ENCODE measurements at regions of chrX and their contacts with region 1.

Region 1: DNA sequence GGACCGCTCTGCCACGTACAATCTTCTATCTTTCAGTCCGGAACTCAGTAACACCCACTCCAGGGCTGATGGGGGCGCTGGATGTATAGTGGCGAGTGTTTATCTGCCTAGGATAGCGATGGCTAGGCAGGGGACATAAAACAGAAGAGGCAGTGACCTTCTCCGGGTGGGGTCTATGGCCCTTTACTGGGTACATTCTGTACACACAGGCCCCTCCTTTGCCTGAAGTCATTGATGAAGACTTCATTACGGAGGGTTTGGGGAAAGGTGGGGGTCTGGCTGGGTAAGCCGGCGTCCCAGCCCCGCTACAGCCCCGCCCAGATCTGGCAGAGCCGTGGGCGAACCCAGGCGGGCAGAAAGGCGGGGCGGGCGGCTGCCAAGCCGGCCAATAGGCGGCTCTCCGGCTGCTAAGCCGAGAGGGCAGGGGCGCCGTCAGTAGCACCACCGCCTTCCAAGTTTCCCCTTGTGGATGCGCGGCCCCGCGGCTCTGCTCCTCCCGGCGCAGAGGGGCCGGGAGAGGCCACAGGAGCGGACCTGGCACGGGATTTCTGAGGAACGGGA is at the start of gene CHST7:
- DNase-seq: peak; percentile 18 to 81 (median 46)
- ATAC-seq: peak; percentile 54
- H3K4me3 ChIP-seq: peak within 1 kb of the TSS; percentile 71
- H3K4me3 Mint-ChIP-seq: peak within 1 kb of the TSS; percentile 74
- H3K27ac ChIP-seq: peak within 1 kb of the TSS; percentile 52 to 64
- H3K27ac Mint-ChIP-seq: peak within 1 kb of the TSS; percentile 78
- H3K4me1 ChIP-seq: peaks cover 50% of the 10 kb centered on the region
- H3K4me1 Mint-ChIP-seq: peaks cover 39% of the 10 kb centered on the region
- H3K27me3 ChIP-seq: no peaks in the 10 kb centered on the region
- H3K27me3 Mint-ChIP-seq: no peaks in the 10 kb centered on the region
- CTCF ChIP-seq: no peak
- total RNA-seq, gene CHST7: 4.0 to 4.6 TPM

Region 2: GRCh38 chrX:45801554-45801953 is 771.9 kb before region 1 on chrX:
- CTCF ChIA-PET with region 1: no interaction called
- POLR2A ChIA-PET with region 1: no interaction called
- intact Hi-C with region 1: loop called in 1 of 2 experiments (anchors 10 kb)
- DNase-seq: peak in 3 of 14 experiments; percentile 59 to 66 (median 64)
- ATAC-seq: peak; percentile 50
- H3K4me3 ChIP-seq: peak overlapping the region; percentile 38
- H3K4me3 Mint-ChIP-seq: peak overlapping the region; percentile 72
- H3K27ac ChIP-seq: no peak overlapping the region
- H3K27ac Mint-ChIP-seq: peak overlapping the region; percentile 83
- H3K4me1 ChIP-seq: peaks cover 28% of the 10 kb centered on the region
- H3K4me1 Mint-ChIP-seq: peaks cover 57% of the 10 kb centered on the region
- H3K27me3 ChIP-seq: no peaks in the 10 kb centered on the region
- H3K27me3 Mint-ChIP-seq: no peaks in the 10 kb centered on the region
- CTCF ChIP-seq: peak; percentile 44

Region 3: DNA sequence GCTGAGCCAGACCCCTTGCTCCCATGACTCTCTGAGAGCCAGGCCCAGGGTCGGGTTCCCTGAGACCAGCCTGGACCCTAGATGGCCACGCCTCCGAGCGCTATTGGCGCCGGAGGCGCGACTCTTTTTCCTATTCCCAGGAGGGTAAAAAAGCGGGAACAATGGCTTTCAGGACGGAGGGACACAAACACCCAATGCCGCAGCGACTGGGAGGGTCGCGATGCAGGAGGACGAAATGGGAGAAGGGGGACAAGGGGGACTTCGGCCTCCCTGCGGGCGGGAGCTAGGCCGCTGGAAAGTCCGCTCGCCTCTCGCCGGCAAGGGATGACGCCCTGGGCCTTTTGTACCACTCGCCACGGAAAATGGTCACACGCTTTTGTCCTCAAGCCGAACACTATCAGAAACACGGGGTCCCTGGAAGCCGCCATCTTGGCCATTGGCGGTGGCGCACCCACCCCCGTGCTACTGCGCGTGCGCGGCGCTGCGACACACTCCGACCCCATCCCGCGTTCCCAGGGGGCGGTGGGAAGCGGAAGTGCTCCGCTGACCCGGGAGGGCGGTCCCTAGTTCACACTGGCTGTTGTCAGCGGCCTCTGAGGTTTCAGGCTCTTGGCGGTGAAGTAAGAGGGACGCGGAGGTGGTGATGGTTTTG is 126.6 kb before region 1 on chrX:
- CTCF ChIA-PET with region 1: interaction called, 3 read pairs
- POLR2A ChIA-PET with region 1: no interaction called
- intact Hi-C with region 1: loop called in 1 of 2 experiments (anchors 5 kb)
- DNase-seq: peak; percentile 66 to 93 (median 79)
- ATAC-seq: peak; percentile 88
- H3K4me3 ChIP-seq: peak overlapping the region; percentile 87
- H3K4me3 Mint-ChIP-seq: peak overlapping the region; percentile 91
- H3K27ac ChIP-seq: peak overlapping the region; percentile 50 to 83
- H3K27ac Mint-ChIP-seq: peak overlapping the region; percentile 92
- H3K4me1 ChIP-seq: peaks cover 18% of the 10 kb centered on the region
- H3K4me1 Mint-ChIP-seq: peaks cover 10% of the 10 kb centered on the region
- H3K27me3 ChIP-seq: no peaks in the 10 kb centered on the region
- H3K27me3 Mint-ChIP-seq: no peaks in the 10 kb centered on the region
- CTCF ChIP-seq: no peak

Region 4: DNA sequence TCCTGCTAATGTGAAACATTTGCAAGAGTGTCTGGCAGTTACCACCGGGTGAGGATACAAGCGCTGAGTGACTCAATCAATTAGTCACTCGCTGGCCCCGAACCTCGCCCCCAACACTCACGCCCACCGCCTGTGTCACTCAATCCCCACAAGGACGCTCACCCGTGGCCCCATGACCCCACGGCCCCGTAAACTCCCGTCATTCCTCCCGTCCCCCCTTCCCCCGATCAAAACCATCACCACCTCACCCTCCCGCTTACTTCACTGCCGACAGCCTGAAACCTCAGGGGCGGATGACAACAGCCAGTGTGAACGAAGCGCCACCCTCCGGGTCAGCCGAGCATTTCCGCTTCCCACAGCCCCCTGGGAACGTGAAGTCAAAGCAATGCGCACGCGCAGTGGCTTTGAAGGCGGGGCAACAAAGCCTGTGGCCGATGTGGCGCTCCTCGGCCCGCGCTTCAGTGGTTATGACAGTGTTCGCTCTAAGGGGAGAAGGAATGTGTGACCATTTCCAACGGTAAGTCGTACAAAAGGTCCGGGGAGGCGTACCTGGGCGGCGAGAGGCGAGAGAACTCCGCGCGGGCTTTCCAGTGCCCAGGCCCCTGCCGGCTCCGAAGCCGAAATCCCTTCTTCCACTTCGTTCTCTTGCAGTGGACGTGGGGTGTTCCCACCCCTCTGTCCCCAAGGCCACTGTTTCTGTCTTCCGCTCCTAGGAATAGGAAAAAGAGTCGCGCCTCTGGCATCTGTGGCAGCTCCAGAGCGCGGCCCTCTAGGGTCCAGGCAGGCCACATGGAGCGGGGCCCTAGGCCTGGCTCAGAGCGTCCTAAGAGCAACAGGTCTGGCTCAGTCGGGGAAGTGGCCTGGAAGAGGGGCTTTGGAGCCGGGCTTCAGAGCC is 28.1 kb before region 1 on chrX and contains the start of gene ZNF674:
- CTCF ChIA-PET with region 1: no interaction called
- POLR2A ChIA-PET with region 1: no interaction called
- intact Hi-C with region 1: loop called in 1 of 2 experiments (anchors 1 kb)
- DNase-seq: peak; percentile 85 to 96 (median 90)
- ATAC-seq: peak; percentile 92
- H3K4me3 ChIP-seq: peak within 1 kb of the TSS; percentile 96
- H3K4me3 Mint-ChIP-seq: peak within 1 kb of the TSS; percentile 93
- H3K27ac ChIP-seq: peak within 1 kb of the TSS; percentile 72 to 78
- H3K27ac Mint-ChIP-seq: peak within 1 kb of the TSS; percentile 93
- H3K4me1 ChIP-seq: peaks cover 32% of the 10 kb centered on the region
- H3K4me1 Mint-ChIP-seq: peaks cover 28% of the 10 kb centered on the region
- H3K27me3 ChIP-seq: no peaks in the 10 kb centered on the region
- H3K27me3 Mint-ChIP-seq: no peaks in the 10 kb centered on the region
- CTCF ChIP-seq: peak; percentile 22
- total RNA-seq, gene ZNF674: 1.2 to 1.9 TPM

Region 5: DNA sequence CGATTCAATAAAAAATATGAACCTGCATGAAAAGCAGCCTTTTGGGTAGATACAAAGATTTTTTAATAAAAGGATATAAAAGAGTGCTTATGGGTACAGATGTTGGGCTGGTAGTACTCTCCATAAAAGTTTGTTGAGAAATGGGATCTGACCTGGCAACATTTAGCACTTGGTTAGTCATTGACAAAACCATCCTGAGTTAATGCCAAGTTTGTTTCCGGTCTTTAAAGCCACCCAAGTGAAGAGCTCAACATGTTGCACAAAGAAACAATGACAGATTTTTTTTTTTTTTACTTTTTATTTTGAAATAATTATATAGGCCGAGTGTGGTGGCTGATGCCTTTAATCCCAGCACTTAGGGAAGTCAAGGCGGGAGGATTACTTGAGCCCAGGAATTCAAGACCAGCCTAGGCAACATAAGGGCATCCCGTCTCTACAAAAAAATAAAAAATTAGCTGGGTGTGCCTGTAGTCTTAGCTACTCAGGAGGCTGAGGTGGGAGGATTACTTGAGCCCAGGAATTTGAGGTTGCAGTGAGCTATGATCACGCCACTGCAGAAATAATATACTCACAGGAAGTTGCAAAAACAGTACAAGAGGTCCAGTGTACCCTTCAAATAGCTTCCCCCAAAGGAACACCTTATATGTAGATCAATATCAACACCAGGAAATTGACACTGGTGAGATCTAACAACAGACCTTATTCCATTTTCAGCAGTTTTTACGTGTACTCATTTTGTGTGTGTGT is 16.7 kb after region 1 on chrX:
- CTCF ChIA-PET with region 1: interaction called, 6 read pairs
- POLR2A ChIA-PET with region 1: interaction called, 9 read pairs
- intact Hi-C with region 1: loop called in 1 of 2 experiments (anchors 1 kb)
- DNase-seq: peak in 1 of 14 experiments; percentile 20
- ATAC-seq: peak; percentile 32
- H3K4me3 ChIP-seq: no peak overlapping the region
- H3K4me3 Mint-ChIP-seq: peak overlapping the region; percentile 30
- H3K27ac ChIP-seq: peak overlapping the region in 1 of 2 donors; percentile 22
- H3K27ac Mint-ChIP-seq: peak overlapping the region; percentile 67
- H3K4me1 ChIP-seq: peaks cover 36% of the 10 kb centered on the region
- H3K4me1 Mint-ChIP-seq: peaks cover 31% of the 10 kb centered on the region
- H3K27me3 ChIP-seq: no peaks in the 10 kb centered on the region
- H3K27me3 Mint-ChIP-seq: no peaks in the 10 kb centered on the region
- CTCF ChIP-seq: no peak

Region 6: DNA sequence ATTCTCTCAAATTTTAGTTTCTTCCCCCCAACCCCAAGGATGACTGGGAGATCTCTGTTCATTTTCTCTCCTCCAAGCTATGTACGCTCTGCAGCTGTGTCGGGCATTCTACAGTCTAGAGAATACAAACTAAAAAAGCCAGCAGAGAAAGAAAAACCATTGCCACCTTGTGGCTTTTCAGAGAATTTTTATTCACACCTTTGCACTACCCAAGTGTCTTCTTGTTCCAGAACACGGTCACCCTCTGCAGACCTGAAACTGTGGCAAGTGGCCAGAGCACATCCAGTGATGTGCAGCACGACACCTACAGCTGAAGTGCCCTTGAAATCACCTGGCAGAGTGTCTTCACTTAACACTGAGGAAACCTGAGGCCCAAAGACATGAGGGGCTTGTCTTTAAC is 68.7 kb after region 1 on chrX:
- CTCF ChIA-PET with region 1: interaction called, 4 read pairs
- POLR2A ChIA-PET with region 1: interaction called, 8 read pairs
- intact Hi-C with region 1: loop called (anchors 1 to 5 kb)
- DNase-seq: peak in 4 of 14 experiments; percentile 20 to 57 (median 52)
- ATAC-seq: peak; percentile 73
- H3K4me3 ChIP-seq: no peak overlapping the region
- H3K4me3 Mint-ChIP-seq: no peak overlapping the region
- H3K27ac ChIP-seq: no peak overlapping the region
- H3K27ac Mint-ChIP-seq: no peak overlapping the region
- H3K4me1 ChIP-seq: peaks cover 5% of the 10 kb centered on the region
- H3K4me1 Mint-ChIP-seq: peaks cover 5% of the 10 kb centered on the region
- H3K27me3 ChIP-seq: no peaks in the 10 kb centered on the region
- H3K27me3 Mint-ChIP-seq: no peaks in the 10 kb centered on the region
- CTCF ChIP-seq: peak; percentile 52

Region 7: DNA sequence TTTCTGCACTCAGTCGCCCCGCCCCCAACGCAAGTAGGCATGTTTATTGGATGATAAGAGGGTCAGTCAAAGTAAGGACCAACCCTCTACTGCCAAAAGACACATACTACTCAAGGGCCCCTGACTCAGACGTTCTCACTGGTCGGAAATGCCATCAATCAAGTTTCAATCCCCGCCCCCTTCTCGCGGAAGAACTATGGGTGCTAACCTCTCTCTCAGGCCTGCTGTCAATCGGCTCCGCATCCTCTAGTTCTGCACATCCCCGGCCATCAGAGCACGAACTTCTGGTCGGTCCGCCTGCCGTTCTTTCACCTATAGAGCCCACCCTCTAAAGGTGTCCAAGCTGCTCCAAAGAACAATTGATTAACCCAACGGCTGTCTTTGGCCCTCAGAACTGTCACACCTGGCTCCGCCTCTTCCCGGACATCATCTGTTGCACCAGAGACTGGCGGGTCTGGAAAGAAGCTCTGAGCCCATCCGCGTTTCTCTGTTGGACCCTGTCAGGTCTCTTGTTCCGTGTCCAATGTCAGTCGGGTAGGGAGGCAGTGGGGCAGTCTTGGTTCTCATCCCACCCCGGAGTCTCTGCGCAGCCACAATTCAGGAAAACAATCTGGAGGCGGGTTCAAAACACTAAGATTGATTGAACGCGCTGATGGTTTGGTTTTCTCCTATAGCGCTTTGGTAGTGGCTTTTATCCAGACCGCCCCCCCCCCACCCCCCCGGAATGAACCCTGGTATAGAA is 555.9 kb after region 1 on chrX:
- CTCF ChIA-PET with region 1: no interaction called
- POLR2A ChIA-PET with region 1: no interaction called
- intact Hi-C with region 1: no loop called
- DNase-seq: peak; percentile 77 to 95 (median 84)
- ATAC-seq: peak; percentile 98
- H3K4me3 ChIP-seq: peak overlapping the region; percentile 75
- H3K4me3 Mint-ChIP-seq: peak overlapping the region; percentile 99
- H3K27ac ChIP-seq: peak overlapping the region; percentile 53 to 60
- H3K27ac Mint-ChIP-seq: peak overlapping the region; percentile 98
- H3K4me1 ChIP-seq: peaks cover 13% of the 10 kb centered on the region
- H3K4me1 Mint-ChIP-seq: peaks cover 10% of the 10 kb centered on the region
- H3K27me3 ChIP-seq: no peaks in the 10 kb centered on the region
- H3K27me3 Mint-ChIP-seq: no peaks in the 10 kb centered on the region
- CTCF ChIP-seq: no peak